Heart left ventricle (tissue), 16 donors: ENCODE measurements at regions of chr4 and their contacts with region 1.

Region 1: DNA sequence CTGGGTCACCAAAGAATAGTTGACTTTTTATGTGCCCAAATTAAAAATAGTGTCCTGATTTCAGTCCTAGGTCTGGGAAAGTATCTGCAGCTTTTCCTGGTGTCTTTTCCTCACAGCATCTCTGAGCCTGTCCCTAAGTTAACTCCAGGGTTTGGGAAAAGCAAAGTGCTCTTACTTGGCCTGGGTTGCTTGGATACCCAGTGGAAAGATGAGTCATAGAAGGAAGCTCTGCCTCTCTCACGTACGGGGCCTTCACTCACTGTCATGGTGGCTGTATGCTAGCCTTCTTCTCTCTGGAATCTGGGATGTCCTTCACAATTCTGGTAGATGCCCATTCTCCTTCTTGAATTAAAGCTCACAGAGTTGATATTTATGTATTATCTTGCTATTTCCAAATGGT is 607.3 kb downstream of the ANKRD50 start:
- DNase-seq: no peak
- ATAC-seq: peak in 1 of 4 donors; percentile 50
- H3K4me3 ChIP-seq: no peak overlapping the region
- H3K27ac ChIP-seq: no peak overlapping the region
- H3K4me1 ChIP-seq: no peaks in the 10 kb centered on the region
- H3K27me3 ChIP-seq: no peaks in the 10 kb centered on the region
- CTCF ChIP-seq: no peak
- POLR2A ChIP-seq: no peak

Region 2: DNA sequence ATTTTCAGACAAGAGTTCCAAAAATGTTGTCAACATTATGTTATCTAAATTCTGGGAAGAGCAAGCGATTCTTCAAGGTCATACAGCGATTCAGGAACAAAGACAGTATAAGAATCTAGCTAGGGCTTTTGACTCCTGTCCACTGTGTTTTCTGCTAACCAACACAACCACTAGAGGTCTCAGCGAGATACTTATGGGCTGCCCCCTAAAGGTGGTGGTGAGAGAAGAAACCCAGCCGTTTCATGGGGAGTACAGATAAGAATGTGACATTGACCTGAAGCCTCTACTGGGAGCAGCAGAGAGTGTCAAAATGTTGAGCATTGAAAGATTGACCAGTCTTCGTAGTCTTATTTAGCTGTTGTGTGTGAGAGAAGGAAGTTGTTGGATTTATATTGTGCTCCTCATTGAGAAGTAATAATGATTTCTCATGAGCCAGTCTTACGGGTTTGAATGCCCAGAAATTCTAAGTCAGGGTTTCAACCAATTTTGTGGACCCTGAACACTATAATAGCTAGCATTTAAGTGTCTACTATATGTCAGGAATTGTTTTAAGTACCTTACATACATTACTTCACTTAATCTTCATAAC is 540.4 kb before region 1 on chr4:
- intact Hi-C with region 1: loop called in 5 of 10 experiments (anchors 5 to 10 kb)
- DNase-seq: peak in 3 of 5 donors; percentile 34 to 60 (median 46)
- ATAC-seq: peak; percentile 86 to 95 (median 92)
- H3K4me3 ChIP-seq: no peak overlapping the region
- H3K27ac ChIP-seq: no peak overlapping the region
- H3K4me1 ChIP-seq: peaks cover 0 to 14% (median 5%) of the 10 kb centered on the region in 12 donors
- H3K27me3 ChIP-seq: no peaks in the 10 kb centered on the region
- CTCF ChIP-seq: peak; percentile 63 to 87 (median 76)
- POLR2A ChIP-seq: no peak

Region 3: GRCh38 chr4:123776254-123776653 is 329.0 kb before region 1 on chr4:
- intact Hi-C with region 1: loop called in 7 of 10 experiments (anchors 5 to 10 kb)
- DNase-seq: no peak
- ATAC-seq: no peak
- H3K4me3 ChIP-seq: no peak overlapping the region
- H3K27ac ChIP-seq: peak overlapping the region in 3 of 12 donors; percentile 41 to 73 (median 45)
- H3K4me1 ChIP-seq: peaks cover 0 to 21% (median 8%) of the 10 kb centered on the region in 12 donors
- H3K27me3 ChIP-seq: no peaks in the 10 kb centered on the region
- CTCF ChIP-seq: no peak
- POLR2A ChIP-seq: no peak

Region 4: DNA sequence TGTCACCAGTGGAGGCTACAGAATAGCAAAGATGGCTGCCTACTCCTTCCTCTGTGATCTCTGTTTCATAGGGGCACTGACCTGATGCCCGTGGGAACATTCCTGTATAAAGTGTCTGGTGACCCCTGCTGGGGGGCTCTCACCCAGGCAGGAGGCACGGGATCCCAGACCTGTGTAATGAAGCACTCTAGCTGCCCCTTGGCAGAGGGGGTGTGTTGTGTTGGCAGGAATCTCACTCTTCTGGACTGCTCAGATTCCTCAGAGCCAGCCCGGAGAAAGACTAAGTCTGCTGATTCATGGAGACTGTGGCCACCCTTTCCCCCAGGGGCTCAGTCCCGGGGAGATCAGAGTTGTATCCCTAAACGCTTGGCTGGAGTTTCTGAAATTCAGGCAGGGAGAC is 60.3 kb before region 1 on chr4:
- intact Hi-C with region 1: no loop called
- DNase-seq: no peak
- ATAC-seq: no peak
- H3K4me3 ChIP-seq: no peak overlapping the region
- H3K27ac ChIP-seq: no peak overlapping the region
- H3K4me1 ChIP-seq: no peaks in the 10 kb centered on the region
- H3K27me3 ChIP-seq: no peaks in the 10 kb centered on the region
- CTCF ChIP-seq: no peak
- POLR2A ChIP-seq: no peak

Region 5: GRCh38 chr4:124177647-124178425 is 72.6 kb after region 1 on chr4:
- intact Hi-C with region 1: no loop called
- DNase-seq: no peak
- ATAC-seq: no peak
- H3K4me3 ChIP-seq: no peak overlapping the region
- H3K27ac ChIP-seq: no peak overlapping the region
- H3K4me1 ChIP-seq: no peaks in the 10 kb centered on the region
- H3K27me3 ChIP-seq: no peaks in the 10 kb centered on the region
- CTCF ChIP-seq: no peak
- POLR2A ChIP-seq: no peak